Ascending aorta (tissue), 2 donors: ENCODE measurements at regions of chr5 and their contacts with region 1.

Region 1: DNA sequence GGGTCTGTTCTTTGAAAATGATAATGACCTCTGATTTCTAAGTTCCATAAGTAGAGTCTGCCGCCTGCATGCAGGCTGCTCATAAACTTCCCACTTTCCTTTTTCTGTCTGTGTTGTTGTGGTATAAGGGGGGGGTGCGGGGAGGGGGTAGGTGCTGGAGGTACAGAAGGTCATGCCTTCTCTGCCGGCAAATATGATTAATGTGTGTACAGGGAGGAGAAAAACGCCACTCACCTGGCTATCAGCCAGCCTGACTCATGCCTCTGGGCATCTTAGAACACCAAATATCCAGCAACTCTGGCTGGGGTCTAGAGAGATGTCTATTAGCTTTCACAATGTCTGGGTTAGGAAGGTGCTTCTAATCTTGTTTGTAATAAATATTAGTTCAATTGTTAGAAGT is 128.3 kb downstream of the EFNA5 start:
- DNase-seq: peak; percentile 47 to 95
- H3K4me3 ChIP-seq: peak overlapping the region; percentile 3 to 49
- H3K27ac ChIP-seq: peak overlapping the region; percentile 54 to 62
- H3K4me1 ChIP-seq: peaks cover 0 to 24% of the 10 kb centered on the region in 2 donors
- H3K27me3 ChIP-seq: no peaks in the 10 kb centered on the region
- CTCF ChIP-seq: no peak

Region 2: GRCh38 chr5:107217721-107218130 is 324.7 kb before region 1 on chr5:
- intact Hi-C with region 1: loop called (anchors 10 kb)
- DNase-seq: peak; percentile 70 to 92
- H3K4me3 ChIP-seq: no peak overlapping the region
- H3K27ac ChIP-seq: peak overlapping the region; percentile 76 to 86
- H3K4me1 ChIP-seq: peaks cover 0 to 9% of the 10 kb centered on the region in 2 donors
- H3K27me3 ChIP-seq: no peaks in the 10 kb centered on the region
- CTCF ChIP-seq: no peak

Region 3: DNA sequence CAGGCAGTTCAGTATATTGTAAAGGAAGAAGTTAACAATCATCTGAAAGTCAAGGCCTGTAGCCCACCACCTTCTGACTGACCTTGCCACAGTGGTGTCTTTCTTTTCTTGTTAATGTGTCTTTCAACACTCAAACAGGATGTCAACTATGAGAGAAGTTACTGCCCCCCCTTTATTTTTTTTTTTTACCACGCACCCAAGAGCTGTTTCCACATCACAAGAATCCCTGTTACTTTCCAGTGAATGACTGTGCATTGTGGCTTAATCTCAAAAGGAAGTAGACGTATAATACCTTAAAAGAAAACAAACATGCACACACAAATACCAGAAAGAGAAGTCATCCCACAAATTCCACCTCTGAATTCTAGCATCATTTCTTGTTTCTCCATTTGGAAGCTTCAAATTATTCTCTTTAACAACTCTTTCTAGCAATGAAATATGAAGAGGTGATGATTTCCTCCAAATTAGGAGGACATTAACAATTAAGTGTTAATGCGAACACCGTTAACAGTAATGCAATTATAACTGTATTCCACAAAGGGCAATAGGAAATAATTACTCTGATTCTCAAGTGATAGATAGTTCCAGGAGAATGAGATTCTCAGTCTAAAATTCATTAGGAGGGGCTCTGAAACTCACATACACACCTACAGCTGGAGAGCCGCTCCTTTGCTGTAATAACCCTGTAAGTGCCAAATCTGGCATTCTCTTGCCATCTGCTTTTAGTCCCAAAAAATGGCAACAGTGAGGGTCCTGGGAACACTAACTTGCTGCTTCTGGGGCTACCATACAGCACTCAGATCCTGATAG is 72.7 kb before region 1 on chr5:
- intact Hi-C with region 1: loop called (anchors 5 kb)
- DNase-seq: no peak
- H3K4me3 ChIP-seq: no peak overlapping the region
- H3K27ac ChIP-seq: peak overlapping the region; percentile 63 to 76
- H3K4me1 ChIP-seq: peaks cover 4 to 20% of the 10 kb centered on the region in 2 donors
- H3K27me3 ChIP-seq: no peaks in the 10 kb centered on the region
- CTCF ChIP-seq: no peak

Region 4: GRCh38 chr5:107486489-107486888 is 55.9 kb before region 1 on chr5:
- intact Hi-C with region 1: loop called (anchors 5 kb)
- DNase-seq: no peak
- H3K4me3 ChIP-seq: no peak overlapping the region
- H3K27ac ChIP-seq: no peak overlapping the region
- H3K4me1 ChIP-seq: peaks cover 0 to 8% of the 10 kb centered on the region in 2 donors
- H3K27me3 ChIP-seq: no peaks in the 10 kb centered on the region
- CTCF ChIP-seq: no peak